Caco-2 (cell line): ENCODE measurements at regions of chr16 and their contacts with region 1.

Region 1: GRCh38 chr16:81035398-81035974 is at the start of gene ATMIN:
- DNase-seq: peak; percentile 85 to 95
- H3K4me3 ChIP-seq: peak within 1 kb of the TSS; percentile 69
- H3K4me3 Mint-ChIP-seq: peak within 1 kb of the TSS; percentile 84
- H3K27ac Mint-ChIP-seq: peak within 1 kb of the TSS; percentile 68
- H3K4me1 ChIP-seq: peaks cover 10% of the 10 kb centered on the region; the same call in 1 of the 2 replicates
- H3K4me1 Mint-ChIP-seq: no peaks in the 10 kb centered on the region
- H3K27me3 ChIP-seq: no peaks in the 10 kb centered on the region
- H3K27me3 Mint-ChIP-seq: no peaks in the 10 kb centered on the region
- CTCF ChIP-seq: peak; percentile 96 to 99
- total RNA-seq, gene ATMIN: 53.0 and 54.5 TPM in 2 replicates

Region 2: DNA sequence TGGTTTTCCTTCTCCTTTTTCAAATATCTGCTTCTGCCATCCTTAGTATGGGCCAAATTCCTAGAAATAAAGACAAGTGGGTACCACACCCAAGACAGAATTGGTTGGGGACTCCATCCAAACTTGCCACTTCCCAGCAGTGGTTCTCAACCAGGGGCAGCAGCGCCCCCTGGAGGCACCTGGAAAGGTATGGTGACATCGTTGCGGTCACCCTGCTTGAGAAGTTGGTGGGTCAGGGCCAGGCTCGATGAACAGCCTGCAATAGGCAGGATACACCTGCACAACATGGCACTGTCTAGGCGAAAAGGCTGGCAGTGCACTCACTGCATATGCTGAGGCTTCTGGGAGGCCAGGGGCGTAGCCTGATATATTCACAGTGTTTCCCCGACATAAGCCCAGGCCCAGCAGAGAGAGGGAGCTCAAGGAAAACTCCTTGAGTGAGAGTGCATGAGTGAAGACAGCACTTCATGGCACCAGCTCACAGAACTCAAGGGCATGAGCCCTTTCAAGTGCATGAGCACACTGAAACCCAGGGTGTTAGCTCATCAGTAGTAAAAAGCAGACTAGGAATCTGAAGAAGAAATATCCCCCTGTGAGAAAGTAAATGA is 86.5 kb before region 1 on chr16:
- CTCF ChIA-PET with region 1: interaction called, 10 read pairs
- POLR2A ChIA-PET with region 1: no interaction called
- intact Hi-C with region 1: no loop called
- DNase-seq: peak; percentile 58 to 76
- H3K4me3 ChIP-seq: no peak overlapping the region
- H3K4me3 Mint-ChIP-seq: no peak overlapping the region
- H3K27ac Mint-ChIP-seq: no peak overlapping the region
- H3K4me1 ChIP-seq: no peaks in the 10 kb centered on the region
- H3K4me1 Mint-ChIP-seq: no peaks in the 10 kb centered on the region
- H3K27me3 ChIP-seq: no peaks in the 10 kb centered on the region
- H3K27me3 Mint-ChIP-seq: no peaks in the 10 kb centered on the region
- CTCF ChIP-seq: peak; percentile 74 to 78

Region 3: GRCh38 chr16:80962879-80963278 is 72.6 kb before region 1 on chr16:
- CTCF ChIA-PET with region 1: no interaction called
- POLR2A ChIA-PET with region 1: no interaction called
- intact Hi-C with region 1: no loop called
- DNase-seq: no peak
- H3K4me3 ChIP-seq: no peak overlapping the region
- H3K4me3 Mint-ChIP-seq: no peak overlapping the region
- H3K27ac Mint-ChIP-seq: no peak overlapping the region
- H3K4me1 ChIP-seq: no peaks in the 10 kb centered on the region
- H3K4me1 Mint-ChIP-seq: no peaks in the 10 kb centered on the region
- H3K27me3 ChIP-seq: no peaks in the 10 kb centered on the region
- H3K27me3 Mint-ChIP-seq: no peaks in the 10 kb centered on the region
- CTCF ChIP-seq: no peak

Region 4: DNA sequence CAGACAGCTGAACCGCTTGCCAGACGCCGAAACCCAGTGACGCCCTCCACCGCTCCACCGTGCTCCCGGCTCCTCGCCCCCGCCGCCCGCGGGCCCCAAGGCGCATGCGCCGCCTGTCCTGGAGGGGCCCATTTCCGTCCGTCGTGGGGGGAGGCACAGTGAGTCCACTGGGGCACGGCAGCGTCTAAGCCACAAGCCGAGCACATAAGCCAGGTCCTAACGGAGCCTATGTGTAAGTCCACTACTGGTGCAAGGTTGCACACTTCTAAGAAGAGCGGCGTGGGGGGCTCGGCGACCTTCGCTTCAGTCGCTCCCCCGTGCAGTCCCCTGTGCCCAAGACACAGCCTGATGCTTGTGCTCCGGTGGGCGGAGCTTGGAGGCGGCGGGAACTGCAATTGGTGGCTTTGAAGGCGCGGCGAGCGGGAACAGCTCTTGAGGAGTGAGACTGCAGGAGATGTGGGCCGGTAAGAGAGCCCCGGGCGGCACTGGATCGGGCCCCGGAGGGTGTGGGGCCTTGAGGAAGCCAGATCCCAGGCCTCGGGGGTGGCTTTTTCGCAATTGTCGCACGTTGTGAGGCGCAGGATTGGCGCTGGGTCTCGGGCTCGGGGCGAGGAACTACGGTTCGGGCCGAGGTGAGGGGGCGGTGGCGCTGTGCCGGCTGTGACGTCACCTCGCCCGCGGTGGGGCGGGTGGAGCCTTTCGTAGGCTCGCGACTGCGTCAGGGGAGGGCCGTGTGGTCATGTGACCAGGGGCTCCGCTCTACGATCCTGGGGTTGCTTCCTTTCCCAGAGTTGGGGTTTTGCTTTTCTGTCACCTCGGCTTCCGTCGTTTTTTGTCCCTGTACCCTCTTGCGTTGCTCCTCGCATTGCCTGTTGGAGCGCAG is 28.4 kb before region 1 on chr16 and contains the starts of genes CENPN and CMC2:
- CTCF ChIA-PET with region 1: interaction called, 9 read pairs
- POLR2A ChIA-PET with region 1: interaction called, 11 read pairs
- intact Hi-C with region 1: no loop called
- DNase-seq: peak; percentile 99
- H3K4me3 ChIP-seq: peak within 1 kb of the TSS; percentile 85
- H3K4me3 Mint-ChIP-seq: peak within 1 kb of the TSS; percentile 94
- H3K27ac Mint-ChIP-seq: peak within 1 kb of the TSS; percentile 100
- H3K4me1 ChIP-seq: peaks cover 13% of the 10 kb centered on the region; the same call in 1 of the 2 replicates
- H3K4me1 Mint-ChIP-seq: peaks cover 7% of the 10 kb centered on the region
- H3K27me3 ChIP-seq: no peaks in the 10 kb centered on the region
- H3K27me3 Mint-ChIP-seq: no peaks in the 10 kb centered on the region
- CTCF ChIP-seq: no peak
- total RNA-seq, gene CENPN: 100 and 105 TPM in 2 replicates
- total RNA-seq, gene CMC2: 94.1 and 101 TPM in 2 replicates

Region 5: DNA sequence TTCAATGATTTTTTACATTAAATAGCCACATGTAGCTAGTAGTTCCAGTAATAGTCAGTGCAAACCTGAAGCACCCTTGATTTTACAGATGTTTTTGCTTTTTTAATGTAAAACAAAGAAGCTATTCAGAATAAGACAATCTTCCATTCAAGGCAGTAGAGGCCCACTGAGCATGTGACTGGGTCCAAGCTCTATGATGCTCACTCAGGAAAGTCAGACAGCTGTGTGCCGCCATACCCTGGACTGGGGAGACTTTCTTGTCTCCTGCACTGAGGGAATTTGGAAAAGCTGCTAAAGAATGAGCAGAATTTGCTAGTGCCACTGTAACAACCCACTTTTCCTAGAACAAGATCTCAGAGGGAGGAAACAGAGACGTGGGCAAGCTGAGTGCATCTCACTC is 17.0 kb before region 1 on chr16:
- CTCF ChIA-PET with region 1: interaction called, 12 read pairs
- POLR2A ChIA-PET with region 1: interaction called, 3 read pairs
- intact Hi-C with region 1: no loop called
- DNase-seq: no peak
- H3K4me3 ChIP-seq: no peak overlapping the region
- H3K4me3 Mint-ChIP-seq: no peak overlapping the region
- H3K27ac Mint-ChIP-seq: no peak overlapping the region
- H3K4me1 ChIP-seq: no peaks in the 10 kb centered on the region
- H3K4me1 Mint-ChIP-seq: no peaks in the 10 kb centered on the region
- H3K27me3 ChIP-seq: no peaks in the 10 kb centered on the region
- H3K27me3 Mint-ChIP-seq: no peaks in the 10 kb centered on the region
- CTCF ChIP-seq: no peak

Region 6: GRCh38 chr16:81077076-81077940 is 41.8 kb after region 1 on chr16 and contains the start of gene C16orf46:
- CTCF ChIA-PET with region 1: interaction called, 17 read pairs
- POLR2A ChIA-PET with region 1: interaction called, 10 read pairs
- intact Hi-C with region 1: loop called (anchors 1 kb)
- DNase-seq: peak; percentile 97 to 99
- H3K4me3 ChIP-seq: peak within 1 kb of the TSS; percentile 68
- H3K4me3 Mint-ChIP-seq: no peak within 1 kb of the TSS
- H3K27ac Mint-ChIP-seq: no peak within 1 kb of the TSS
- H3K4me1 ChIP-seq: peaks cover 7% of the 10 kb centered on the region; the same call in 1 of the 2 replicates
- H3K4me1 Mint-ChIP-seq: no peaks in the 10 kb centered on the region
- H3K27me3 ChIP-seq: no peaks in the 10 kb centered on the region
- H3K27me3 Mint-ChIP-seq: no peaks in the 10 kb centered on the region
- CTCF ChIP-seq: no peak
- total RNA-seq, gene C16orf46: 0.70 and 0.95 TPM in 2 replicates

Region 7: DNA sequence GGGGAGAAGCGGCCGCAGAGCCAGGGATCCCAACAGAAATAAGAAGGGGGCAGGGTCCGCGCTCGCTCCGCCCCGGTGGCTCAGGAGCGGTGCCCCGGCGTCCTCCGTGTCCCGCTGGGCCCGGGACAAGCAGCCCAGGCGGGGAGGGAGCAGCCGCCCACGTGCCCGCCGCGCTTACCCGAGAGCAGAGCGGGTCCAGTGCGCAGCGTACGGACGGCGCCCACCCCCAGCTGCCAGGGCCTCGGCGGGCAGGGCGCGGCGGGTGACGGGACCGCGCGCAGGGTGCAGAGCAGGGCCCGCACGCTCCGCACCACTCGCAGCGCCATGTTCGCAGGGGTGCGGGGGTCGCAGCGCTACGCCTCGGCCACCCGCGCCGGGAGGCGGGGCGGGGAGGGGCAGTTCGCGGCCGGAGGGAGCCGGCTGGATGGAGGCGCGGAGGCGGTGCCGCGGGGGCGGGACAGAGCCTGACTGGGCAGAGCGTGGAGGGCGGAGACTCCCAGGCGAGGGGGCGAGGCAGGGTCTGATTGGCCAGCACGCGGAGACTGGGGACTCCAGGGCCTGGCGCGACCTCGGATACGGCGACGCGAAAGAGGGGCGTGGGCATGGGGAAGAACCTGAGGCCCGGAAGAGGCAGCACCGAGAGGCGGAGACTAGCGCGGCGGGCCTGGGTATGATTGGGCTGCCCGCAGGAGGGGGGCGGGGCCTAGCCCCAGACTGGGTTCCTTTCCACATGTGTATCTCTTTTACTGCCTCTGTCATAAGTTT is 60.6 kb after region 1 on chr16 and contains the start of gene GCSH:
- CTCF ChIA-PET with region 1: no interaction called
- POLR2A ChIA-PET with region 1: no interaction called
- intact Hi-C with region 1: loop called (anchors 1 kb)
- DNase-seq: peak; percentile 100
- H3K4me3 ChIP-seq: peak within 1 kb of the TSS; percentile 97
- H3K4me3 Mint-ChIP-seq: peak within 1 kb of the TSS; percentile 73
- H3K27ac Mint-ChIP-seq: peak within 1 kb of the TSS; percentile 74
- H3K4me1 ChIP-seq: 0 out of 2 replicates have a peak, but pooled peaks cover 3% of the 10 kb centered on the region
- H3K4me1 Mint-ChIP-seq: peaks cover 7% of the 10 kb centered on the region
- H3K27me3 ChIP-seq: no peaks in the 10 kb centered on the region
- H3K27me3 Mint-ChIP-seq: no peaks in the 10 kb centered on the region
- CTCF ChIP-seq: no peak
- total RNA-seq, gene GCSH: 105 and 115 TPM in 2 replicates

Region 8: GRCh38 chr16:81109804-81110203 is 74.3 kb after region 1 on chr16:
- CTCF ChIA-PET with region 1: no interaction called
- POLR2A ChIA-PET with region 1: no interaction called
- intact Hi-C with region 1: no loop called
- DNase-seq: no peak
- H3K4me3 ChIP-seq: no peak overlapping the region
- H3K4me3 Mint-ChIP-seq: no peak overlapping the region
- H3K27ac Mint-ChIP-seq: no peak overlapping the region
- H3K4me1 ChIP-seq: no peaks in the 10 kb centered on the region
- H3K4me1 Mint-ChIP-seq: peaks cover 8% of the 10 kb centered on the region
- H3K27me3 ChIP-seq: no peaks in the 10 kb centered on the region; the same call in 1 of the 2 replicates
- H3K27me3 Mint-ChIP-seq: no peaks in the 10 kb centered on the region
- CTCF ChIP-seq: no peak

Region 9: GRCh38 chr16:81198635-81199034 is 163.1 kb after region 1 on chr16:
- CTCF ChIA-PET with region 1: interaction called, 6 read pairs
- POLR2A ChIA-PET with region 1: no interaction called
- intact Hi-C with region 1: loop called (anchors 10 kb)
- DNase-seq: peak; percentile 39 to 47
- H3K4me3 ChIP-seq: no peak overlapping the region
- H3K4me3 Mint-ChIP-seq: no peak overlapping the region
- H3K27ac Mint-ChIP-seq: no peak overlapping the region
- H3K4me1 ChIP-seq: no peaks in the 10 kb centered on the region
- H3K4me1 Mint-ChIP-seq: no peaks in the 10 kb centered on the region
- H3K27me3 ChIP-seq: no peaks in the 10 kb centered on the region
- H3K27me3 Mint-ChIP-seq: peaks cover 3% of the 10 kb centered on the region
- CTCF ChIP-seq: peak in 1 of 2 experiments; percentile 34

Region 10: DNA sequence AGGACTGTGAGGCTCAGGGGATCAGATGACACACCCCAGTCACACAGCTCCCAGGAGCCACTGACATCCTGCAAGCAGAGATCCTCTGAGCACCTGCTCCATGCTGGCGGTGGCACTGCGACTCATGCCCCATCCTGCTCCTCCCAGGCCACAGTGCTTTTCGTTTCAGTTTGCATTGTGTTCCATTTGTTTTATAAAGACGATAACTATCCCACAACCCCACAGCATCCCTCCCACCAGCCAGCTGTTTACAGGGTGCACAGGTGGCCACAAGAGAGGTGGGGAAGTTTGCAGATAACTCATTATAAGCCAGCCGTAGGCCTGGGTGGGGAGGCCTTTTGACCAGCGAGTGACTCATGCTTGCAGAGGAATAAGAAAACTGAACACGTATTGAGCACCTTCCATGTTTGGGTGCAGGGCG is 231.2 kb after region 1 on chr16:
- CTCF ChIA-PET with region 1: no interaction called
- POLR2A ChIA-PET with region 1: no interaction called
- intact Hi-C with region 1: no loop called
- DNase-seq: no peak
- H3K4me3 ChIP-seq: no peak overlapping the region
- H3K4me3 Mint-ChIP-seq: no peak overlapping the region
- H3K27ac Mint-ChIP-seq: no peak overlapping the region
- H3K4me1 ChIP-seq: no peaks in the 10 kb centered on the region
- H3K4me1 Mint-ChIP-seq: peaks cover 7% of the 10 kb centered on the region
- H3K27me3 ChIP-seq: no peaks in the 10 kb centered on the region
- H3K27me3 Mint-ChIP-seq: no peaks in the 10 kb centered on the region
- CTCF ChIP-seq: no peak